Activated B cell treated with CpG ODN at 0.5 μM for 24 hours (primary cell): ENCODE measurements at regions of chr12 and their contacts with region 1.

Region 1: DNA sequence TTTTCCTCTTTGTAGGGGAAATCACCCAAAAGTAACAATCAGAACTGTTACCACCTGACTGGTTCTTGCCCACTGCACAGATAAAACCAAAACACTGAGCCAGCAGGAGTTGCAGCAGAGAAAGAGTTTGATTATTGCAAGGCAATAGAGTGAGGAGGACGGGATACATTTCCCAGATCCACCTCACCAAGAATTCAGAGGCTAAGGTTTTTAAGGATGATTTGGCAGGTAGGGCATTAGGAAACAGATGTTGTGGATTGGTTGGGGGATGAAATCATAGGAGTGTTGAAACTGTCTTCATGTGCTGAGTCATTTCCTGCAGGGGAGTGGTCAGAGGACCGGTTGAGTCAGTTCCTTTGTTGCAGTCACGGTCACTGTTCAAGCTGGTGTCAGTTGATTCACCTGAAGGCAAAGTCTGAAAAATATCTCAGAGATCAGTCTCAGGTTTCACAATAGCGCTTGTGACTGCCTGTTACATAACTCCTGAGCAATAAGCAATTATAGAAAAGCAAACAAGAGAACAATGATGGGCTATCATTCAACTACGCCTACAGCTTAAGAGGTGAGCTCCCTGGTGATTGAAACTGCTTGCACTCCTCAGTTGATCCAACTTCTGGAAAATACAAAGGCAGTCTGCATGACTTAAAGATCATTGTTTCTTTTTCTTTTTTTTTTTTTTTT is 20.3 kb upstream of the AMN1 start:
- DNase-seq: no peak
- ATAC-seq: peak; percentile 74
- H3K4me3 Mint-ChIP-seq: peak overlapping the region; percentile 68
- H3K27ac Mint-ChIP-seq: peak overlapping the region; percentile 97
- H3K4me1 Mint-ChIP-seq: peaks cover 78% of the 10 kb centered on the region
- H3K27me3 Mint-ChIP-seq: no peaks in the 10 kb centered on the region
- CTCF ChIP-seq: no peak

Region 2: DNA sequence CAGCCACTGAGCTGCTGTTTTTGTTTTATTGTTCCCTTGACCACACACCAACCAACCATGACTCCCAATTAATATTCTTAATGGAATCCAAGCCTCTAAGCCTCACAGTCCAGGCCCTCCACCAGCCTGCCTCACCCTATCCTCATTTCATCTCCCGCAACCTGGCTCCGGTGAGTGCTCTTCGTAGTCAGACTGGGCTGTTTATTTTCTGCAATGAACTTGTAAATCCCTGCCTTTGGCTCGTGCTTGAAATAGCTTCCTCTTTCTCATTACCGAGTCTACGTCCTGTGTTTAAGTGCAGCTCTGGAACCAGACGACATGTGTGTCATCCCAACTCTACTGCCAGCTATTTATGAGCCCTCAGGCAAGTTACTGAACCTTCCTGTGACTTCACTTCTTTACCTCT is 102.1 kb before region 1 on chr12:
- CTCF ChIA-PET with region 1: no interaction called
- POLR2A ChIA-PET with region 1: no interaction called
- intact Hi-C with region 1: no loop called
- DNase-seq: no peak
- ATAC-seq: peak; percentile 47
- H3K4me3 Mint-ChIP-seq: no peak overlapping the region
- H3K27ac Mint-ChIP-seq: peak overlapping the region; percentile 42
- H3K4me1 Mint-ChIP-seq: peaks cover 30% of the 10 kb centered on the region
- H3K27me3 Mint-ChIP-seq: no peaks in the 10 kb centered on the region
- CTCF ChIP-seq: no peak

Region 3: DNA sequence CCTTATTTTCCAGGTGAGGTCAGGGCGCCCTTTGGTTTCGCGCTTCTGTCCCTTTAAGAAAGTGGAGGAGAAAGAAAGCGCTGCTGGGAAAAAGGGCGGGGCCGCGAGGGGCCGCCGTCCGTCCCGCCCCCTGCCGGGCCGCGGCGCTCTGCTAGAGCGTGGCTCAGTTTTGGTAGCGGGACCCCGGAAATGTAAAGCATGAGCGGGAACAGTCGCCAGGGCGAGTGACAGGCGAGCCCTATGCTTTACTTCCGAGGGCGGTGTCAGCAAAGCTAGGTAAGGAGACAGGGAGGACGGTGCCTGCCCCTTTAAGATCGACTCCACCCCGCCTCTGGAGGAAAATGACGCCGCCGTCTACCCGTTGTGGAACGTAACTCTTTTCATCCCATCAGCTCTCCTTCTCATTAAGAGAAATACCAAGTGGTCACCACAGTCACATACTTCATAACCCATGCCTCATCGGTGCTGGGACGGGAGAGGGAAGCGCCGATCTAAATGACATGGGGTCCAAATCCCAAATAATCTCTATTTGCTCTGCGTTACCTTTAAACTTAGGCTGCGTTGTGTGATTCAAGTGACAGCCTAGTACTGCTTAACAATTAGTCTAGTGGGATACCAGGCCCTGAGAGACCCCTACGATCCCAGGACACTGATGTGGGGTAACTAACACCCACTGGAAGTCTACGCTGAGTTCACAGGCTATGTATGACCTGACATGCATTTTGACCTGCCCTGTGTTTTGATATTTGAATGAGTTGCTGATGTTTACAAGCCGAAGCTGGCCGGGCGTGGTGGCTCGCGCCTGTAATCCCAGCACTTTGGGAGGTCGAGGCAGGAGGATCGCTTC is 89.9 kb before region 1 on chr12 and contains the start of gene ETFBKMT:
- CTCF ChIA-PET with region 1: no interaction called
- POLR2A ChIA-PET with region 1: interaction called, 5 read pairs
- intact Hi-C with region 1: loop called (anchors 1 kb)
- DNase-seq: peak; percentile 88
- ATAC-seq: peak; percentile 98
- H3K4me3 Mint-ChIP-seq: peak within 1 kb of the TSS; percentile 96
- H3K27ac Mint-ChIP-seq: peak within 1 kb of the TSS; percentile 99
- H3K4me1 Mint-ChIP-seq: peaks cover 35% of the 10 kb centered on the region
- H3K27me3 Mint-ChIP-seq: no peaks in the 10 kb centered on the region
- CTCF ChIP-seq: no peak
- total RNA-seq, gene ETFBKMT: 0.91 and 2.0 TPM in 2 replicates

Region 4: GRCh38 chr12:31768046-31768445 is 18.9 kb after region 1 on chr12:
- CTCF ChIA-PET with region 1: no interaction called
- POLR2A ChIA-PET with region 1: interaction called, 11 read pairs
- intact Hi-C with region 1: loop called (anchors 2 kb)
- DNase-seq: no peak
- ATAC-seq: no peak
- H3K4me3 Mint-ChIP-seq: no peak overlapping the region
- H3K27ac Mint-ChIP-seq: peak overlapping the region; percentile 35
- H3K4me1 Mint-ChIP-seq: peaks cover 30% of the 10 kb centered on the region
- H3K27me3 Mint-ChIP-seq: no peaks in the 10 kb centered on the region
- CTCF ChIP-seq: no peak

Region 5: DNA sequence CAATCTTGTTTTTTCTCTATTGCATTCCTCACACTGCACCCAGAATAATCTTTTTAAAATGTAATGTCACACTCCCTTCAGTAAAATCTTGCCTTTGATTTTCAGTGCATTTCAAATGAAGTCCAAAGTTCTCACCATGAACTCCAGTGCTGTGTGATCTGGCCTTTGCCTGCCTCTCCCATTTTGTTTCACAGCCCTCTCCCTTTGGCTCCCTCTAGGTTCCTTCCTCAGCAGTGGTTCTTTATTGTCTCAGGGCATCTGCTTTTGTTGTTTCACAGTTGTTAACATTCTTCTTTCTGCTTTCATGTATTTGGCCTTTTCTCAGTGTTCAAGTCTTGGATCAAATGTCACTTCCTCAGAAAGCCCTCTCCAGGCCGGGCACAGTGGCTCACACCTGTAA is 64.1 kb after region 1 on chr12:
- CTCF ChIA-PET with region 1: no interaction called
- POLR2A ChIA-PET with region 1: interaction called, 46 read pairs
- intact Hi-C with region 1: loop called (anchors 1 kb)
- DNase-seq: no peak
- ATAC-seq: no peak
- H3K4me3 Mint-ChIP-seq: no peak overlapping the region
- H3K27ac Mint-ChIP-seq: peak overlapping the region; percentile 69
- H3K4me1 Mint-ChIP-seq: peaks cover 45% of the 10 kb centered on the region
- H3K27me3 Mint-ChIP-seq: no peaks in the 10 kb centered on the region
- CTCF ChIP-seq: no peak

Region 6: GRCh38 chr12:31859232-31859977 is 110.2 kb after region 1 on chr12:
- CTCF ChIA-PET with region 1: no interaction called
- POLR2A ChIA-PET with region 1: interaction called, 3 read pairs
- intact Hi-C with region 1: loop called (anchors 1 kb)
- DNase-seq: peak; percentile 35
- ATAC-seq: peak; percentile 93
- H3K4me3 Mint-ChIP-seq: peak overlapping the region; percentile 61
- H3K27ac Mint-ChIP-seq: peak overlapping the region; percentile 87
- H3K4me1 Mint-ChIP-seq: peaks cover 31% of the 10 kb centered on the region
- H3K27me3 Mint-ChIP-seq: no peaks in the 10 kb centered on the region
- CTCF ChIP-seq: no peak

Region 7: GRCh38 chr12:31896514-31897039 is 147.4 kb after region 1 on chr12:
- CTCF ChIA-PET with region 1: no interaction called
- POLR2A ChIA-PET with region 1: interaction called, 14 read pairs
- intact Hi-C with region 1: loop called (anchors 1 kb)
- DNase-seq: peak; percentile 58
- ATAC-seq: peak; percentile 93
- H3K4me3 Mint-ChIP-seq: peak overlapping the region; percentile 73
- H3K27ac Mint-ChIP-seq: peak overlapping the region; percentile 96
- H3K4me1 Mint-ChIP-seq: peaks cover 69% of the 10 kb centered on the region
- H3K27me3 Mint-ChIP-seq: no peaks in the 10 kb centered on the region
- CTCF ChIP-seq: no peak